Activated T-helper 1 cell treated with anti-CD3 and anti-CD28 coated beads, Interleukin-12 subunit alpha, Interleukin-12 subunit beta, Interleukin-2, Interleukin-4 antibody, amounts not matched to agents 30 ng/mL and 10 ng/mL and 1 ng/mL, durations not matched to agents 14 hours and 24 hours and 36 hours (primary cell): ENCODE measurements at regions of chr1 and their contacts with region 1.

Region 1: DNA sequence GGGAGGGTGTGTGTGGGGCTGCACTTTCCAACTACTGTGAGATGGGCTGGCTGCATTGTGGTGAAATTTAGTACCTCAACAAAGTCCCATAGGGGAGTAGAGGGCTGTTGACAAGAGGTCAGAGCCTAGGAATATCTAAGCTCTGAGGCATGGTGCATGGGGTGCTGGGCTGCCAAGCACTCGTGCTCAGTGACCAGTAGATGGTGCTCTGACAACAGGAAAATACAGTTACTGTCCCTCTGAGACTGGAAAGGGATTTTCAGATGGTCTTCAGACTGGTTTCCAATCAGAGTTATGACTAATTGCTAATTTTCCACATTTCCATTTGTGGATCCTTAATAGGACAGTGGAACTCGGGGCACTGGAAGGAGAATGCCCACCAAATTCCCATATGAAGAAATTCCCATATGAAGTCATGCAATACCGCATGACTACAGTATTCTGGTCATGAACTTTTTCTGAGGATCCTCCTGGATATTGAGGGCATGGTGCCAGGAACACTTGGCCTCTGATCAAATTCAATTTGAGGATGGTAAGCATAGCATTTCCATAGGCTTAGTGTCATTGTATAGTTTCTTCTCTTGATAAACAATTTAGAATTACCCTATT is 4.1 kb upstream of the CACNA1E start:
- DNase-seq: peak; percentile 7
- H3K4me3 Mint-ChIP-seq: no peak overlapping the region
- H3K27ac Mint-ChIP-seq: no peak overlapping the region
- H3K4me1 Mint-ChIP-seq: peaks cover 11% of the 10 kb centered on the region
- H3K27me3 Mint-ChIP-seq: peaks cover 34% of the 10 kb centered on the region

Region 2: GRCh38 chr1:181134543-181135362 is 344.5 kb before region 1 on chr1:
- intact Hi-C with region 1: no loop called
- DNase-seq: no peak
- H3K4me3 Mint-ChIP-seq: peak overlapping the region; percentile 57
- H3K27ac Mint-ChIP-seq: peak overlapping the region; percentile 93
- H3K4me1 Mint-ChIP-seq: peaks cover 78% of the 10 kb centered on the region
- H3K27me3 Mint-ChIP-seq: peaks cover 3% of the 10 kb centered on the region

Region 3: GRCh38 chr1:181676269-181676668 is 197.0 kb after region 1 on chr1:
- intact Hi-C with region 1: loop called (anchors 1 kb)
- DNase-seq: no peak
- H3K4me3 Mint-ChIP-seq: no peak overlapping the region
- H3K27ac Mint-ChIP-seq: no peak overlapping the region
- H3K4me1 Mint-ChIP-seq: no peaks in the 10 kb centered on the region
- H3K27me3 Mint-ChIP-seq: no peaks in the 10 kb centered on the region

Region 4: GRCh38 chr1:182054698-182055326 is 575.6 kb after region 1 on chr1:
- intact Hi-C with region 1: loop called (anchors 1 kb)
- DNase-seq: peak; percentile 24
- H3K4me3 Mint-ChIP-seq: no peak overlapping the region
- H3K27ac Mint-ChIP-seq: no peak overlapping the region
- H3K4me1 Mint-ChIP-seq: peaks cover 7% of the 10 kb centered on the region
- H3K27me3 Mint-ChIP-seq: peaks cover 12% of the 10 kb centered on the region

Region 5: DNA sequence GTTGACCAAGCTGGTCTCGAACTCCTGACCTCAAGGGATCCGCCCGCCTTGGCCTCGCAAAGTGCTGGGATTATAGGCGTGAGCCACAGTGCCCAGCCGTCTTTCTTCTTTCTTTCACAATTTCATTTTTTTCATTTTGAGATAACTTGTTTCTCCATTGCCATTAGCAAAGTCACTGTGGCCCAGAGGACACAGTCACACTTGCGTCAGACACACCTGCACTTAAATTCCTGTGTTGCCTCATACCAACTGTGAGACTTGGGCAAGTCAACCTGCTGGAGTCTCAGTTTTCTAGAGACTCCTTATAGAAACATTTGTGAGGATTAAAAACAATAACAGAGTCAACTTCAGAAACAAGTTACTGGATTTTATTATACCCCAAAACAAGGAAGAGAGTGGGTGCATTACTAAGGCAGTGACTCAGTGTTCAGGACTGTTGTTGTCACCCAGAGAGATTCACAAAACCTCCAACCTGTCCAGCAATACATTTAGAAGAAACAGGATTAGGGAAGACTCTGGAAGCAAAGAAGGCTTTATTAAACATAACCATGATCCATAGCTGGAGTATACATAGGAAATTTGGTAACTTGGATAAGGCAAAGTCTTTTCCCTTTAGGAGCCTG is 918.6 kb after region 1 on chr1:
- intact Hi-C with region 1: loop called (anchors 2 kb)
- DNase-seq: no peak
- H3K4me3 Mint-ChIP-seq: no peak overlapping the region
- H3K27ac Mint-ChIP-seq: no peak overlapping the region
- H3K4me1 Mint-ChIP-seq: peaks cover 13% of the 10 kb centered on the region
- H3K27me3 Mint-ChIP-seq: peaks cover 13% of the 10 kb centered on the region